MCF 10A (cell line): ENCODE measurements at regions of chr3 and their contacts with region 1.

Region 1: DNA sequence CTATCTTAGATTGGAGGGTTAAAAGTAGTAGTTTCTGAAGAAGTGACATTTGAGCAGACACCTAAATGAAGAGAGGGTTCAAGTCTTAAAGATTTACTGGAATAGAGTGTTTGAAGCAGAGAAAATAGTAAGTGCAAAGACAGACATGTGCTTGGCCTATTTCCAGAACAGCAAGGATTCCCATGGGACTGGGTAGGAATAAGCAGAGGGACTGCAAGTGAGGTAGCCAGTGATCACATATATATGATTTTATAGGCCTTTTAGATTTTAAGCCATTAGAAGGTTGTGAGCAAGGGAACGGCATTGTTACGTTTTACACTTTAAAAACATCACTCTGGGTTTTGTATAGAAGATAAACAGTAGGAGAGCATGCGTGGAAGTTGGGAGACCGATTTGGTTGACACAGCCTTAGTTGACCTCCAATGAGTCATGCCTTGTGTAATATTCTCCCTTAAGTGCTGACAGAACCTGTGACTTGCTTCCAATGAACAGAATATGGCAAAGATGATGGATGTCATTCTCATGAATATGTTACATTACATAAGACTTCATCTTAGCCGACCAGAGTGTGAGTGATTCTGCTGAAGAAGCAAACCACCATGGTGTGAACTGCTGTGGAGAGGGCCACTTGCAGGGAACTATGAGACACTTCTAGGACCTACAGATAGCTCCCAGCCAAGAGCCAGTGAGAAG is 37.1 kb upstream of the SLC4A7 start:
- DNase-seq: peak; percentile 96
- H3K4me3 Mint-ChIP-seq: no peak overlapping the region
- H3K27ac Mint-ChIP-seq: peak overlapping the region; percentile 29
- H3K4me1 Mint-ChIP-seq: peaks cover 27% of the 10 kb centered on the region
- H3K27me3 Mint-ChIP-seq: no peaks in the 10 kb centered on the region
- CTCF ChIP-seq: no peak

Region 2: DNA sequence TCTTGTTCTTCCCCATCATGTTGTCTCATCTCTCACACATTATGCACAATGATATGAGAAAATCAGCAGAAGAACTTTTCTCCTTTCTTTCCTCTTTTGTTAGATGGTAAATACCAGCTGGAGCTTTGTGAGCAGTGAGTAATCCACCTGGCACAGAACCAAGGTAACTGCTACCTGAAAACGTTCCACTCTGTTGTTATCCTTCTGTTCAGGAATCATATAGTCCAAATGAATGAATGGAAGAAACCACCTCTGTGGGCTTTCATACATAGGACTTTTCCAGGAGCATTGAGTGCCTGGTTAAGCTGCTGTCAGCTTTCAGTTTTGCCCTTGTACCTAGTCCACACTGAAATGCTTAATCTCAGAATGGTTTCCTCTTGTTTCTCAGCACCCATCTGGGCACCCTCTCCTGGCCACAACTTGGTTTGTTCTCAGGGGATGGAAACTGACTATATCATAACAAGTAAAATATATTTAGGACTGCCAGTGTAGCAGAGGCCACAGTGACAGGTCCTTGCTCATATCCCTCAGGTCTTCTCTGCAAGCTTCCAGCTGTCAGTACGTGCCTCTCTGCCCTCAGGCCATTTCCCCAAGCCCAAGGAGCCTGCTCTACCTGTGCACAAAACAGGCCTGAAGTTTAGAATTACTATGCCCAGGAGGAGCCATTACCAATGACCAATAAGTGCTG is 13.7 kb before region 1 on chr3:
- CTCF ChIA-PET with region 1: interaction called, 6 read pairs
- POLR2A ChIA-PET with region 1: interaction called, 16 read pairs
- intact Hi-C with region 1: no loop called
- DNase-seq: peak; percentile 74
- H3K4me3 Mint-ChIP-seq: no peak overlapping the region
- H3K27ac Mint-ChIP-seq: no peak overlapping the region
- H3K4me1 Mint-ChIP-seq: peaks cover 13% of the 10 kb centered on the region
- H3K27me3 Mint-ChIP-seq: no peaks in the 10 kb centered on the region
- CTCF ChIP-seq: no peak

Region 3: DNA sequence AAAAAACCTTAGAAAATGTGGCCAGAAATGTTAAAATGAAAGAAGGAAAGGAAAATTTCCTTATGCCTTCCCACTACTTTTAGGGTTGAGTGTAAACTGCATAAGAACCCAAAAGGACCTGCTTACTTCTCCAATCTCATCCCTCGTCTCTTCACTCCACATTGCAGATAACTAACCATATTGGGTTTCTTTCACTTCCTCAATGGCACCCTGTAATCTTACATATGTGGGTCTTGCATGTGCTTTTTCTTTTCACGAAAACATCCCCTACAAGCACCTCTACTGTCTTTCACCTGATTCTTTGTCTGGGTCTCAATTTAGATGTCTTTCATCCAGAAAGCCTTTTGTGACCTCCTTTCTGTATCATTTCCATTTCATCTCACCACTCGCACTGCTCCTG is 177.7 kb after region 1 on chr3:
- CTCF ChIA-PET with region 1: no interaction called
- POLR2A ChIA-PET with region 1: no interaction called
- intact Hi-C with region 1: no loop called
- DNase-seq: no peak
- H3K4me3 Mint-ChIP-seq: no peak overlapping the region
- H3K27ac Mint-ChIP-seq: no peak overlapping the region
- H3K4me1 Mint-ChIP-seq: peaks cover 6% of the 10 kb centered on the region
- H3K27me3 Mint-ChIP-seq: no peaks in the 10 kb centered on the region
- CTCF ChIP-seq: no peak